Tibial artery (tissue), 4 donors: ENCODE measurements at regions of chr12 and their contacts with region 1.

Region 1: DNA sequence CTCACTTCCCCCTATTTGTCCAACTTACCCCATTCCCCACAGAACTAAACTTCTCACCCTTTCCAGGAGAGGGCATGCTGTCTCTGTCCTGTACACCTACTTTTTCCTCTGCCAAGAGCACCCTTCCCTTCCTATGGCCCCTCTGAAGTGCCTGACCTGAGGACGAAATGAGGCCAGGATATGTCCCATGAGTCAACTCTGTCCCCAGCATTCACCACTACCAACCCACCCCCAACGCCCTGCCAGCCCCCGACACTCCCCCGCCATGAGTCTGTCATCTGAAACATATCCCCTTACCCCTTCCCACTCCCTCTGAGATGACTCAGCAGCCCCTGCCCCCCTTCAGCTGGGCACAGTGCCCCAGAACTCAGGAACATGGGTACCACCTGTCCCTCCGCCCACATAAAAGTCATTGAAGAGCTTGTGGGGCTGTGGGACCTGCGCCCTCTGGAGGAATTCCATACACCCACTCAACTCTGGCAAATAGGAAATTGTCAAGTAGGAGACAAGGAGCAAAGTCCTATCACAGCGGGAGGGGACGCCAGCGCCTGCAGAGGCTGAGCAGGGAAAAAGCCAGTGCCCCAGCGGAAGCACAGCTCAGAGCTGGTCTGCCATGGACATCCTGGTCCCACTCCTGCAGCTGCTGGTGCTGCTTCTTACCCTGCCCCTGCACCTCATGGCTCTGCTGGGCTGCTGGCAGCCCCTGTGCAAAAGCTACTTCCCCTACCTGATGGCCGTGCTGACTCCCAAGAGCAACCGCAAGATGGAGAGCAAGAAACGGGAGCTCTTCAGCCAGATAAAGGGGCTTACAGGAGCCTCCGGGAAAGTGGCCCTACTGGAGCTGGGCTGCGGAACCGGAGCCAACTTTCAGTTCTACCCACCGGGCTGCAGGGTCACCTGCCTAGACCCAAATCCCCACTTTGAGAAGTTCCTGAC is 26.3 kb downstream of the ITGA7 start:
- DNase-seq: peak; percentile 35 to 76
- H3K4me3 ChIP-seq: peak overlapping the region; percentile 4 to 5
- H3K27ac ChIP-seq: peak overlapping the region; percentile 23 to 49
- H3K4me1 ChIP-seq: peaks cover 0 to 15% (median 11%) of the 10 kb centered on the region in 4 donors
- H3K27me3 ChIP-seq: no peaks in the 10 kb centered on the region
- CTCF ChIP-seq: peak; percentile 29 to 36

Region 2: GRCh38 chr12:55724226-55724939 is 43.0 kb after region 1 on chr12:
- intact Hi-C with region 1: loop called (anchors 5 kb)
- DNase-seq: peak; percentile 80 to 87
- H3K4me3 ChIP-seq: no peak overlapping the region
- H3K27ac ChIP-seq: peak overlapping the region; percentile 58 to 98
- H3K4me1 ChIP-seq: peaks cover 5 to 81% (median 66%) of the 10 kb centered on the region in 4 donors
- H3K27me3 ChIP-seq: no peaks in the 10 kb centered on the region
- CTCF ChIP-seq: peak; percentile 64 to 69